Activated B cell treated with CpG ODN at 0.5 μM for 24 hours (primary cell): ENCODE measurements at regions of chr20 and their contacts with region 1.

Region 1: GRCh38 chr20:32109392-32110172 is at the start of gene TM9SF4:
- DNase-seq: peak; percentile 86
- ATAC-seq: peak; percentile 88
- H3K4me3 Mint-ChIP-seq: peak within 1 kb of the TSS; percentile 97
- H3K27ac Mint-ChIP-seq: peak within 1 kb of the TSS; percentile 100
- H3K4me1 Mint-ChIP-seq: peaks cover 33% of the 10 kb centered on the region
- H3K27me3 Mint-ChIP-seq: no peaks in the 10 kb centered on the region
- CTCF ChIP-seq: no peak
- total RNA-seq, gene TM9SF4: 41.9 and 48.1 TPM in 2 replicates

Region 2: GRCh38 chr20:32040142-32041022 is 69.2 kb before region 1 on chr20:
- CTCF ChIA-PET with region 1: interaction called, 7 read pairs
- POLR2A ChIA-PET with region 1: interaction called, 10 read pairs
- intact Hi-C with region 1: no loop called
- DNase-seq: peak; percentile 77
- ATAC-seq: peak; percentile 88
- H3K4me3 Mint-ChIP-seq: peak overlapping the region; percentile 78
- H3K27ac Mint-ChIP-seq: peak overlapping the region; percentile 90
- H3K4me1 Mint-ChIP-seq: peaks cover 80% of the 10 kb centered on the region
- H3K27me3 Mint-ChIP-seq: no peaks in the 10 kb centered on the region
- CTCF ChIP-seq: no peak

Region 3: DNA sequence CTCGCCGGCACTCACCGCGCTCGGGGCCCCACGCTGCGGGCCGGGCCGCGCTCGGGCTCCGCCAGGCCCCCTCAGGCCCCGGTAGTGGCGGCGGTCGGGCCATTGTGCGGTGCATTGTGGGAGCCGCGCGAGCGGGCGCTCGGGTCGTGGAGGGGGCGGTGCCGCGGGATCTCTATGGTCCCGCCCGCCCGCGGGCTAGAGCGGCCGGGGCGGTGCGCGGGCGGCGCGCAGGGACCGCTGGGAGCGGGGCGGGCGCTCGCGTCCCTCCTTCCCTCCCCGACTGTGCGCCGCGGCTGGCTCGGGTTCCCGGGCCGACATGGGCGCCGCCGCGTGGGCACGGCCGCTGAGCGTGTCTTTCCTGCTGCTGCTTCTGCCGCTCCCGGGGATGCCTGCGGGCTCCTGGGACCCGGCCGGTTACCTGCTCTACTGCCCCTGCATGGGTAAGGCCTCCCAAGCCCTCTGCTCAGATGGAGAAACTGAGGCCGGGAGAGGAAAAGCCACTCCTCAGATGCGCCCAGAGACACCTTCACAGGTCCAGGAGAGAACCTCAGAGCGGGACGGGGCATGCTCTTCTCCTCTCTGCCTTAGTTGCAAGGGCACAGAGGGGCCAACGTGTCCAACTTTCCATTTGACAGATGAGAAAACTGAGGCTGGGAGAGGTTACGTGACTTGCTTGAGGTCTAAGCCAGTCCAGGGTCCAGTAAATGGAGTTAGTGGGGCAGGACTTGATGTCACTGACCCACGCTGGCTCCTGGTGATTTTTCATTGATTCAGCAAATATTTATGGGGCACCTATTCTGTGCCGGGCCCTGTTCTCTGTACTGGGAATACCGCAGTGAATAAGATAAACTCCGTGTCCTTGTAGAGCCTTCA is 98.3 kb after region 1 on chr20 and contains the starts of genes PLAGL2 and POFUT1:
- CTCF ChIA-PET with region 1: no interaction called
- POLR2A ChIA-PET with region 1: interaction called, 3 read pairs
- intact Hi-C with region 1: loop called (anchors 1 kb)
- DNase-seq: peak; percentile 92
- ATAC-seq: peak; percentile 97
- H3K4me3 Mint-ChIP-seq: peak within 1 kb of the TSS; percentile 91
- H3K27ac Mint-ChIP-seq: peak within 1 kb of the TSS; percentile 85
- H3K4me1 Mint-ChIP-seq: peaks cover 62% of the 10 kb centered on the region
- H3K27me3 Mint-ChIP-seq: no peaks in the 10 kb centered on the region
- CTCF ChIP-seq: no peak
- total RNA-seq, gene PLAGL2: 17.3 and 17.9 TPM in 2 replicates
- total RNA-seq, gene POFUT1: 20.4 and 24.0 TPM in 2 replicates

Region 4: GRCh38 chr20:32333988-32334885 is 224.7 kb after region 1 on chr20:
- CTCF ChIA-PET with region 1: no interaction called
- POLR2A ChIA-PET with region 1: no interaction called
- intact Hi-C with region 1: no loop called
- DNase-seq: no peak
- ATAC-seq: peak; percentile 35
- H3K4me3 Mint-ChIP-seq: peak overlapping the region; percentile 16
- H3K27ac Mint-ChIP-seq: peak overlapping the region; percentile 79
- H3K4me1 Mint-ChIP-seq: peaks cover 49% of the 10 kb centered on the region
- H3K27me3 Mint-ChIP-seq: no peaks in the 10 kb centered on the region
- CTCF ChIP-seq: no peak